Uterus (tissue), 4 donors: ENCODE measurements at regions of chr1 and their contacts with region 1.

Region 1: GRCh38 chr1:23422241-23423030 is 2.1 kb downstream of the TCEA3 start:
- DNase-seq: peak; percentile 74 to 76
- H3K4me3 ChIP-seq: no peak overlapping the region
- H3K27ac ChIP-seq: peak overlapping the region; percentile 68 to 85
- H3K4me1 ChIP-seq: no peaks in the 10 kb centered on the region
- H3K27me3 ChIP-seq: no peaks in the 10 kb centered on the region
- CTCF ChIP-seq: no peak
- POLR2A ChIP-seq: no peak

Region 2: GRCh38 chr1:23484253-23485001 is 62.0 kb after region 1 on chr1:
- intact Hi-C with region 1: loop called (anchors 5 kb)
- DNase-seq: peak; percentile 96
- H3K4me3 ChIP-seq: peak overlapping the region; percentile 71 to 96
- H3K27ac ChIP-seq: peak overlapping the region; percentile 92 to 97
- H3K4me1 ChIP-seq: no peaks in the 10 kb centered on the region
- H3K27me3 ChIP-seq: no peaks in the 10 kb centered on the region
- CTCF ChIP-seq: no peak
- POLR2A ChIP-seq: peak in 1 of 2 donors; percentile 3